ENCODE measurements at regions of chr17 and their contacts with region 1.

Region 1: GRCh38 chr17:81666342-81667191 is at the starts of genes CCDC137 and OXLD1:
- DNase-seq: peak; percentile 88 to 92 (median 90)
- H3K4me3 ChIP-seq: peak within 1 kb of the TSS; percentile 81 to 85
- H3K4me3 Mint-ChIP-seq: peak within 1 kb of the TSS; percentile 90 to 98 (median 95)
- H3K27ac ChIP-seq: peak within 1 kb of the TSS; percentile 80
- H3K27ac Mint-ChIP-seq: peak within 1 kb of the TSS; percentile 88 to 97 (median 96)
- H3K4me1 ChIP-seq: peaks cover 60% of the 10 kb centered on the region
- H3K4me1 Mint-ChIP-seq: peaks cover 14 to 69% (median 37%) of the 10 kb centered on the region in 4 donors
- H3K27me3 ChIP-seq: no peaks in the 10 kb centered on the region
- H3K27me3 Mint-ChIP-seq: no peaks in the 10 kb centered on the region
- total RNA-seq, gene CCDC137: 28.0 to 29.3 TPM
- total RNA-seq, gene OXLD1: 52.5 to 60.8 TPM

Region 2: DNA sequence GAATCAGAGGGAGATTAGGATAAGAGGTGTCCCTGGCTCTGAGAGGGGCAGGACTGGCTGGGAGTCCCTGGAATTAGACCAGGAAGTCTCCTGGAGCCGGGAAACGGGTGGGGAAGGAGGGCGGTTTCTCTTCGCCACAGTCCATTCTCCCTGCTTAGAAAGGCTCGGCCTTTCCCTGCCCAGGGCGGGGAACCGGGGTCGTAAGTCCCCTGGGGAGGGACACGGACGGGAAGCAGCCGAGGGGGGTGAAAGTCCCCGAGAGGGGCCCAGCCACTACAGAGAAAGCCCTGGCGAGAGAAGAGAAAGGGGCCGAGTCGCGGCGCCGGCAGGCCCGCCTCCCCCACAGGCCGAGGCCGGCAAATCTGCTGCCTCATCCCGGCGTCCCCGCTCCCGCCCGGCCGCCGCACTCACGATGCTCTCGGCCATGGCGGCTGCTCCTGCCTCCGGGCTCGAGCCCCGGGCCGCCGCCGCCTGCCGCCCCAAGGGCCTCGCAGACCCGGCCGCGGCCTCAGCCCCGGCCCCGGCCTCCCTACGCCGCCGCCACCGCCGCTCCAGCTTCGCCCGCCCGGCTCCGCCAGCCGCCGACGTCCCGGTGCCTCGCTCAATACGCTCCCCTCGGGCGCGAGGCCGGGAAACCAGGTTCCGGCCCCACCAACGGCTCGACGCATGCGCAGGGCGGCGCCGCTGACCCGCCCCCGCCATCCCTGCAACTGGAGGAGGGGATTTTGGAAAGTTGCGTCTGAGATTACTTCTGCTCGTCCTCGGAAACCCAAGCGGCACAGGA is 29.9 kb before region 1 on chr17 and contains the starts of genes NPLOC4 and TSPAN10:
- CTCF ChIA-PET with region 1: interaction called, 3 read pairs
- POLR2A ChIA-PET with region 1: interaction called, 11 read pairs
- intact Hi-C with region 1: loop called (anchors 1 kb)
- DNase-seq: peak; percentile 64 to 83 (median 79)
- H3K4me3 ChIP-seq: peak within 1 kb of the TSS; percentile 68 to 76
- H3K4me3 Mint-ChIP-seq: peak within 1 kb of the TSS; percentile 92 to 97 (median 95)
- H3K27ac ChIP-seq: peak within 1 kb of the TSS; percentile 65
- H3K27ac Mint-ChIP-seq: peak within 1 kb of the TSS; percentile 85 to 97 (median 95)
- H3K4me1 ChIP-seq: peaks cover 34% of the 10 kb centered on the region
- H3K4me1 Mint-ChIP-seq: peaks cover 9 to 26% (median 17%) of the 10 kb centered on the region in 4 donors
- H3K27me3 ChIP-seq: no peaks in the 10 kb centered on the region
- H3K27me3 Mint-ChIP-seq: no peaks in the 10 kb centered on the region
- total RNA-seq, gene NPLOC4: 91.0 to 105 TPM
- total RNA-seq, gene TSPAN10: 1.1 to 1.2 TPM

Region 3: DNA sequence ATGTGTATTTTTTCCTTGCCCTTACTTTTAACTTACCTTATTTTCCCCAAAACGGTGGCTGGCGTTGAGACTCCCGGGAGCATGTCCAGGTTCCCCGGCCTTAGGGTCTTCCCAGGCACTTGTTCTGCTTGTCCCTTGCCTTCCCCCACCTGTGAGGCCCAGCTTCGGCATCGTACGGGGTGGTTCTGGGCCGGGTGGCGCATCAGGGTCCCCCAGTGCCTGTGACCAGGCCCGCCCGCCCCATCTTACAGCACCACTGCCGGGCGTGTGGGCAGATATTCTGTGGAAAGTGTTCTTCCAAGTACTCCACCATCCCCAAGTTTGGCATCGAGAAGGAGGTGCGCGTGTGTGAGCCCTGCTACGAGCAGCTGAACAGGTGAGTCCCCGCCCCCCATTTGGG is 24.6 kb after region 1 on chr17:
- CTCF ChIA-PET with region 1: no interaction called
- POLR2A ChIA-PET with region 1: no interaction called
- intact Hi-C with region 1: no loop called
- DNase-seq: no peak
- H3K4me3 ChIP-seq: no peak overlapping the region
- H3K4me3 Mint-ChIP-seq: no peak overlapping the region
- H3K27ac ChIP-seq: no peak overlapping the region
- H3K27ac Mint-ChIP-seq: no peak overlapping the region
- H3K4me1 ChIP-seq: peaks cover 3% of the 10 kb centered on the region
- H3K4me1 Mint-ChIP-seq: peaks cover 0 to 16% (median 5%) of the 10 kb centered on the region in 4 donors
- H3K27me3 ChIP-seq: no peaks in the 10 kb centered on the region
- H3K27me3 Mint-ChIP-seq: no peaks in the 10 kb centered on the region

Region 4: DNA sequence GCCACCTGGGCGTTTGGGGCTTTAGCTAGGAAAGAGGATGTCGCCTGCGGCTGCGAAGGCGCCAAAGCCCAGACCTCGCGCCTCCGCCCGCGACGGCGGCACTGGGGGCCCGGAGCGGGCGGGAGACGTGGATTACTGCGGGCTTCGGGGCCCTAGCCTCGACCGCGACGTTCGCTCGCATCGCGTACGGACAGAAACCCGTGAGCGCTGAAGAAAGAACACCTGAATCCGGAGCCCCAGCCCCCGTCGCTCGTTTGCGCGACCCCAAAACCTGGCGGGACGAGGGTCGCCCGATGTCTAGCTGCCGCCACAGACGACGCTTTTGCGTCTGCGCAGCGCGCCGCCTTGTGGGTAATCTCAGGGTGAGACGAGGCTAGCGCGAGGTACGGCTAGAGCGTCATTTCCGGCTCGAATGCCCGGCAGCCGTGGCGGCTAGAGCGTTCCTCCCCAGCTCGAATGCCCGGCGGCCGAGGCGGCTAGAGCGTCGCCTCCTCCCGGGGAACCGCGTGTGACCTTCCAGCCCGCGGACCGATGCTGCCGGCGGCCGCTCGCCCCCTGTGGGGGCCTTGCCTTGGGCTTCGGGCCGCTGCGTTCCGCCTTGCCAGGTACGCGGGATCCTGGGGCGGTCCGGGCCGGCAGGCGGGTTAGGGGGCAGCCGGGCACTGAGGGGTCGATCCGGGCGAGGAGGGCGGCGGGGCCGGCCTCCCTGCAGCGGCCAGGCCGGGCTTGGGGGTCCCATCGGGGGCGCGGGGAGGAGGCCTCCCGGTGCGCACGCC is 36.6 kb after region 1 on chr17 and contains the start of gene MRPL12:
- CTCF ChIA-PET with region 1: no interaction called
- POLR2A ChIA-PET with region 1: interaction called, 15 read pairs
- intact Hi-C with region 1: loop called (anchors 5 kb)
- DNase-seq: peak; percentile 83 to 89 (median 85)
- H3K4me3 ChIP-seq: peak within 1 kb of the TSS; percentile 61 to 63
- H3K4me3 Mint-ChIP-seq: peak within 1 kb of the TSS; percentile 87 to 94 (median 90)
- H3K27ac ChIP-seq: peak within 1 kb of the TSS; percentile 87
- H3K27ac Mint-ChIP-seq: peak within 1 kb of the TSS; percentile 92 to 97 (median 94)
- H3K4me1 ChIP-seq: peaks cover 32% of the 10 kb centered on the region
- H3K4me1 Mint-ChIP-seq: peaks cover 8 to 40% (median 26%) of the 10 kb centered on the region in 4 donors
- H3K27me3 ChIP-seq: no peaks in the 10 kb centered on the region
- H3K27me3 Mint-ChIP-seq: no peaks in the 10 kb centered on the region
- total RNA-seq, gene MRPL12: 21.9 to 25.6 TPM

Region 5: DNA sequence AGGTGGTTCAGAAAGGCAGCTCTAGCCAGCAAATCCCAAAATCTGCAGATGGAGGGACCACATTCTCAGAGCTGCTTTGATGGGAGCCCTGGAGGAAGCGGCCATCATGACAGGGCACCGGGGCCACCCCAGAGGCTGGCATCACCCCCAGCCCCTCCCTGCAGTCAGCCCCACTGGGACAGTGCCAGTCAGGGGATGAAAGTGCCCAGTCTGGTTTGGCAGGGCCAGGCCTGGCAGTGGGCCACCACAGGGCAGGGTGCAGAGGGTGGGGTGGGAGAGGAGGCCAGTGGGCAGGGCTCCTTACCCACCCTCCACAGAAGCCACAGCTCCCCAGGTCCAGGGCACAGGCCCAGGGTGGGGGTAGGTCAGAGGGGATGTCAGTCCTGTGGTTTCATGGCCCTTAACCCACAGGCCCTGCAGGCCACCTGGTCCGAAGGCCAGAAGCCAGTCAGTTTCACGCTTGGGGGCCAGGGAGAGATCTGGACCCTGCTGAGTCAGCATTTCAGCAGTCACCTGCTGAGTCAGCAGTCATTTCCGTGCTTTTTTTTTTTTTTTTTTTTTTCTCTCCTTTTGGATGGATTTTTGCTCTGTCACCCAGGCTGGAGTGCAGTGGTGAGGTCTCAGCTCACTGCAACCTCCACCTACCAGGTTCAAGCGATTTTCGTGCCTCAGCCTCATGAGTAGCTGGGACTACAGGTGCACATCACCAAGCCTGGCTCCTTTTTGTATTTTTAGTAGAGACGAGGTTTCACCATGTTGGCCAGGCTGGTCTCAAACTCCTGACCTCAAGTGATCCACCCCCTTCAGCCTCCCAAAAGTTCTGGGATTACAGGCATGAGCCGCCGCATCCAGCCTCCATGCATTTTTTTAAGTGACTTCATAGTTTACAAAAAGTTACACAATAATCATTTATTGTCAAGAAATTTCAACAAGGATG is 55.9 kb after region 1 on chr17:
- CTCF ChIA-PET with region 1: no interaction called
- POLR2A ChIA-PET with region 1: no interaction called
- intact Hi-C with region 1: no loop called
- DNase-seq: no peak
- H3K4me3 ChIP-seq: no peak overlapping the region
- H3K4me3 Mint-ChIP-seq: no peak overlapping the region
- H3K27ac ChIP-seq: no peak overlapping the region
- H3K27ac Mint-ChIP-seq: no peak overlapping the region
- H3K4me1 ChIP-seq: no peaks in the 10 kb centered on the region
- H3K4me1 Mint-ChIP-seq: peaks cover 0 to 3% (median 1%) of the 10 kb centered on the region in 4 donors
- H3K27me3 ChIP-seq: no peaks in the 10 kb centered on the region
- H3K27me3 Mint-ChIP-seq: peaks cover 9 to 11% of the 10 kb centered on the region in 2 donors

Region 6: DNA sequence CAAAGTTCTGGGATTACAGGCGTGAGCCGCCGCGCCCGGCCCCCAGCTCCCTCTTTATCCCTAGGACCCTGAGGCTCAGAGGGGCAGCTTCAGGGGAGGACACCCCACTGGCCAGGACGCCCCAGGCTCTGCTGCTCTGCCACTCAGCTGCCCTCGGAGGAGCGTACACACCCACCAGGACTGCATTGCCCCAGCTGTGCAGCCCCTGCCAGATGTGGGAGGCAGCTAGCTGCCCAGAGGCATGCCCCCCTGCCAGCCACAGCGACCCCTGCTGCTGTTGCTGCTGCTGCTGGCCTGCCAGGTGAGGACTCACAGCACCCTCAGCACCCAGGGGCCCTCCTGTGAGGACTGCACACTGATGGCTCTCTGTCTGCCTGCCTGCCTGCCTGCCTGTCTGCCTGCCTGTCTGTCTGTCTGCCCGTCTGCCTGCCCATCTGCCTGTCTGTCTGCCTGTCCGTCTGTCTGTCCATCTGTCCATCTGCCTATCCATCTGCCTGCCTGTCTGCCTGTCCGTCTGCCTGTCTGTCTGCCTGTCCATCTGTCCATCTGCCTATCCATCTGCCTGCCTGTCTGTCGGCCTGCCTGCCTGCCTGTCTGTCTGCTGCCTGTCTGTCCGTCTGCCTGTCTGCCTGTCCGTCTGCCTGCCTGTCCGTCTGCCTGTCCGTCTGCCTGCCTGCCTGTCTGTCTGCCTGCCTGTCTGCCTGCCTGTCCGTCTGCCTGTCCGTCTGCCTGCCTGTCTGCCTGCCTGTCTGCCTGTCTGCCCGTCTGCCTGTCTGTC is 142.4 kb after region 1 on chr17:
- CTCF ChIA-PET with region 1: no interaction called
- POLR2A ChIA-PET with region 1: no interaction called
- intact Hi-C with region 1: no loop called
- DNase-seq: peak in 1 of 5 donors; percentile 13
- H3K4me3 ChIP-seq: no peak overlapping the region
- H3K4me3 Mint-ChIP-seq: peak overlapping the region in 1 of 8 donors; percentile 48
- H3K27ac ChIP-seq: no peak overlapping the region
- H3K27ac Mint-ChIP-seq: no peak overlapping the region
- H3K4me1 ChIP-seq: no peaks in the 10 kb centered on the region
- H3K4me1 Mint-ChIP-seq: no peaks in the 10 kb centered on the region
- H3K27me3 ChIP-seq: no peaks in the 10 kb centered on the region
- H3K27me3 Mint-ChIP-seq: peaks cover 9 to 17% of the 10 kb centered on the region in 2 donors

Measured in CD4-positive, alpha-beta memory T cell (primary cell).